GM12878 (cell line): ENCODE measurements at regions of chr14 and their contacts with region 1.

Region 1: GRCh38 chr14:73403181-73403752 is 55.1 kb downstream of the NUMB start:
- DNase-seq: no peak
- ATAC-seq: peak; percentile 23
- H3K4me3 ChIP-seq: no peak overlapping the region
- H3K27ac ChIP-seq: peak overlapping the region; percentile 45
- H3K4me1 ChIP-seq: peaks cover 28% of the 10 kb centered on the region
- H3K27me3 ChIP-seq: no peaks in the 10 kb centered on the region
- CTCF ChIP-seq: no peak
- EP300 ChIP-seq: no peak
- POLR2A ChIP-seq: no peak
- RAD21 ChIP-seq: no peak

Region 2: GRCh38 chr14:73386342-73386741 is 16.9 kb before region 1 on chr14:
- CTCF ChIA-PET with region 1: interaction called, 5 read pairs
- POLR2A ChIA-PET with region 1: interaction called, 6 read pairs
- RAD21 ChIA-PET with region 1: interaction called, 4 read pairs
- SMC1A ChIA-PET with region 1: interaction called, 30 read pairs
- in situ Hi-C with region 1: no loop called
- intact Hi-C with region 1: no loop called
- DNase-seq: no peak
- ATAC-seq: no peak
- H3K4me3 ChIP-seq: no peak overlapping the region
- H3K27ac ChIP-seq: no peak overlapping the region
- H3K4me1 ChIP-seq: no peaks in the 10 kb centered on the region
- H3K27me3 ChIP-seq: no peaks in the 10 kb centered on the region
- CTCF ChIP-seq: no peak
- EP300 ChIP-seq: no peak
- POLR2A ChIP-seq: no peak
- RAD21 ChIP-seq: no peak

Region 3: DNA sequence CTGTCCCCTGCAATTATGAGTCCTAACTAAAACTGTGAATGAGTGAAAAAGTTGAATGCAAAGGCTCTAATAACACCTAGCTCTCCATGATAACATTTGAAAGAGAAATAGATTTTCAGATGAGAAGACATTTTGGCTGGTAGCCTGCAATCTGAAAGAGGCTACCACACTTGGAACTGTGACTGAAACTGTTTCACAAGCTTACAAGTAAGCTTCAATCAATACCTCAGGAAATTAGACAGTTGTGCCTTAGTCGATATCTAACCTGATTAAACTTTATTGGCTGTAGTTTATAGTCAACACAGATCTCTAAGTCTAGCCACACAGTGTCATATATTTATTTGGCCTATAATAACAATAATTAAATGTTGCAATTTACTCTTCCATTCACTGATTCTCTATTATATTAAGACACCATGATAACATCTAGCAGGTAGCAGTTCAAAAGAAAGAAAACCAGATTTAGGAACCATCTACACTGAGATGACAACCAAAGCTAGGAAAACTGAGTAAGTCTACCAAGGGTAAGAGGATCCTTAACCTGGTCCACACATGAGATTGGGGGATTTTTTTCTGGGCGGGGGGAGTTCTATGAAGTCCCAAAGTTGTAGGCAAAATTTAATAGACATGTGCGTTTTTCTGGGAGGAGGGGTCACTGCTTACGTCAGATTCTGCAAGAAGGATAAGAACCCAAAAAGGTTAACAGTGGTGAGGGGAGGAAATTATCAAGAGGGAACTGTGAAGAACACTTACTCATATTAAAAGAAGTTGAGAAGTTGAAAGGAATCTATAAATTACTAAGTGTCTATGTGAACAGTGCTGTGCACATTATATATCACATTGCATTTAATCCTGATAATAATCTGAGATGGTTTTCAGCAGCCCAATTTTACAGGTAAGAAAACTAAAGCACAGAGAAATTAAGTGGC is 10.7 kb before region 1 on chr14:
- CTCF ChIA-PET with region 1: interaction called, 7 read pairs
- POLR2A ChIA-PET with region 1: interaction called, 5 read pairs
- RAD21 ChIA-PET with region 1: interaction called, 4 read pairs
- SMC1A ChIA-PET with region 1: interaction called, 30 read pairs
- in situ Hi-C with region 1: no loop called
- intact Hi-C with region 1: no loop called
- DNase-seq: no peak
- ATAC-seq: peak; percentile 89
- H3K4me3 ChIP-seq: no peak overlapping the region
- H3K27ac ChIP-seq: no peak overlapping the region
- H3K4me1 ChIP-seq: peaks cover 16% of the 10 kb centered on the region
- H3K27me3 ChIP-seq: no peaks in the 10 kb centered on the region
- CTCF ChIP-seq: no peak
- EP300 ChIP-seq: peak in 1 of 2 experiments; percentile 43; a peak in 1 of 4 replicates
- POLR2A ChIP-seq: no peak
- RAD21 ChIP-seq: no peak

Region 4: GRCh38 chr14:73418227-73418626 is 15.0 kb after region 1 on chr14:
- CTCF ChIA-PET with region 1: interaction called, 12 read pairs
- POLR2A ChIA-PET with region 1: interaction called, 34 read pairs
- RAD21 ChIA-PET with region 1: interaction called, 19 read pairs
- SMC1A ChIA-PET with region 1: interaction called, 52 read pairs
- in situ Hi-C with region 1: no loop called
- intact Hi-C with region 1: no loop called
- DNase-seq: no peak
- ATAC-seq: no peak
- H3K4me3 ChIP-seq: no peak overlapping the region
- H3K27ac ChIP-seq: no peak overlapping the region
- H3K4me1 ChIP-seq: peaks cover 19% of the 10 kb centered on the region
- H3K27me3 ChIP-seq: no peaks in the 10 kb centered on the region
- CTCF ChIP-seq: no peak
- EP300 ChIP-seq: no peak
- POLR2A ChIP-seq: no peak
- RAD21 ChIP-seq: no peak

Region 5: GRCh38 chr14:73452341-73453186 is 49.3 kb after region 1 on chr14:
- CTCF ChIA-PET with region 1: no interaction called
- POLR2A ChIA-PET with region 1: interaction called, 18 read pairs
- RAD21 ChIA-PET with region 1: interaction called, 10 read pairs
- SMC1A ChIA-PET with region 1: interaction called, 67 read pairs
- in situ Hi-C with region 1: no loop called
- intact Hi-C with region 1: loop called (anchors 5 kb)
- DNase-seq: no peak
- ATAC-seq: peak; percentile 69
- H3K4me3 ChIP-seq: no peak overlapping the region; the same call in 1 of the 2 replicates
- H3K27ac ChIP-seq: peak overlapping the region; percentile 32; the same call in 1 of the 2 replicates
- H3K4me1 ChIP-seq: peaks cover 11% of the 10 kb centered on the region
- H3K27me3 ChIP-seq: no peaks in the 10 kb centered on the region
- CTCF ChIP-seq: no peak
- EP300 ChIP-seq: no peak
- POLR2A ChIP-seq: no peak
- RAD21 ChIP-seq: no peak

Region 6: GRCh38 chr14:73458151-73458976 is 55.1 kb after region 1 on chr14 and contains the start of gene NUMB:
- CTCF ChIA-PET with region 1: interaction called, 14 read pairs
- POLR2A ChIA-PET with region 1: interaction called, 18 read pairs
- RAD21 ChIA-PET with region 1: interaction called, 11 read pairs
- SMC1A ChIA-PET with region 1: interaction called, 109 read pairs
- in situ Hi-C with region 1: no loop called
- intact Hi-C with region 1: loop called (anchors 5 kb)
- DNase-seq: peak; percentile 100
- ATAC-seq: peak; percentile 94
- H3K4me3 ChIP-seq: peak within 1 kb of the TSS; percentile 97
- H3K27ac ChIP-seq: peak within 1 kb of the TSS; percentile 71
- H3K4me1 ChIP-seq: peaks cover 4% of the 10 kb centered on the region; the same call in 1 of the 2 replicates
- H3K27me3 ChIP-seq: no peaks in the 10 kb centered on the region
- CTCF ChIP-seq: 0 out of 6 replicates have a peak, but pooled peaks of 1 of the 3 experiments have one; percentile 7
- EP300 ChIP-seq: no peak
- POLR2A ChIP-seq: peak; percentile 94
- RAD21 ChIP-seq: no peak
- polyA plus RNA-seq, gene NUMB: 29.8 to 30.9 TPM

Region 7: DNA sequence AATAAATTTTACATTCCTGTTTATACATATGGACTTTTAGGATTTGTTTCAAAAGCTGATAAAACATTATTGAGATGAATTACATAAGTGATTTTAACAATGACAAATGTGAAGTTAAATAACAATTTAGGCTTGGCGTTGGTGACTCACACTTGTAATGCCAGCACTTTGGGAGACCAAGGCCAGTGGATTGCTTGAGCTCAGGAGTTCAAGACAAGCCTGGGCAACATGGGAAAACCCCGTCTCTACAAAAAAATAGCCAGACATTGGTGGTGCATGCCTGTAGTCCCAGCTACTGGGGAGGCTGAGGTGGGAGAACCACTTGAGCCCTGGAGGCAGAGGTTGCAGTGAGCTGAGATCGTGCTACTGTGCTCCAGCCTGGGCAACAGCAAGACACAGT is 173.1 kb after region 1 on chr14:
- CTCF ChIA-PET with region 1: no interaction called
- POLR2A ChIA-PET with region 1: no interaction called
- RAD21 ChIA-PET with region 1: no interaction called
- SMC1A ChIA-PET with region 1: no interaction called
- in situ Hi-C with region 1: no loop called
- intact Hi-C with region 1: no loop called
- DNase-seq: no peak
- ATAC-seq: no peak
- H3K4me3 ChIP-seq: no peak overlapping the region
- H3K27ac ChIP-seq: no peak overlapping the region
- H3K4me1 ChIP-seq: peaks cover 3% of the 10 kb centered on the region
- H3K27me3 ChIP-seq: no peaks in the 10 kb centered on the region
- CTCF ChIP-seq: no peak
- EP300 ChIP-seq: no peak
- POLR2A ChIP-seq: no peak
- RAD21 ChIP-seq: no peak